ENCODE measurements at regions of chr2 and their contacts with region 1.

Region 1: GRCh38 chr2:225041851-225042799 is at the start of gene DOCK10:
- DNase-seq: peak; percentile 29 to 81 (median 57)
- ATAC-seq: peak; percentile 60
- H3K4me3 ChIP-seq: peak within 1 kb of the TSS; percentile 87 to 88
- H3K4me3 Mint-ChIP-seq: peak within 1 kb of the TSS; percentile 98
- H3K27ac ChIP-seq: peak within 1 kb of the TSS; percentile 73 to 77
- H3K27ac Mint-ChIP-seq: peak within 1 kb of the TSS; percentile 97
- H3K4me1 ChIP-seq: peaks cover 50% of the 10 kb centered on the region
- H3K4me1 Mint-ChIP-seq: peaks cover 55% of the 10 kb centered on the region
- H3K27me3 ChIP-seq: no peaks in the 10 kb centered on the region
- H3K27me3 Mint-ChIP-seq: no peaks in the 10 kb centered on the region
- CTCF ChIP-seq: no peak
- total RNA-seq, gene DOCK10: 183 to 188 TPM

Region 2: GRCh38 chr2:224927646-224928173 is 114.4 kb before region 1 on chr2:
- CTCF ChIA-PET with region 1: interaction called, 3 read pairs
- POLR2A ChIA-PET with region 1: interaction called, 3 read pairs
- intact Hi-C with region 1: loop called in 1 of 2 experiments (anchors 5 kb)
- DNase-seq: peak; percentile 39 to 93 (median 65)
- ATAC-seq: peak; percentile 81
- H3K4me3 ChIP-seq: no peak overlapping the region
- H3K4me3 Mint-ChIP-seq: peak overlapping the region; percentile 62
- H3K27ac ChIP-seq: peak overlapping the region; percentile 77 to 84
- H3K27ac Mint-ChIP-seq: peak overlapping the region; percentile 99
- H3K4me1 ChIP-seq: peaks cover 94% of the 10 kb centered on the region
- H3K4me1 Mint-ChIP-seq: peaks cover 97% of the 10 kb centered on the region
- H3K27me3 ChIP-seq: no peaks in the 10 kb centered on the region
- H3K27me3 Mint-ChIP-seq: no peaks in the 10 kb centered on the region
- CTCF ChIP-seq: no peak

Region 3: DNA sequence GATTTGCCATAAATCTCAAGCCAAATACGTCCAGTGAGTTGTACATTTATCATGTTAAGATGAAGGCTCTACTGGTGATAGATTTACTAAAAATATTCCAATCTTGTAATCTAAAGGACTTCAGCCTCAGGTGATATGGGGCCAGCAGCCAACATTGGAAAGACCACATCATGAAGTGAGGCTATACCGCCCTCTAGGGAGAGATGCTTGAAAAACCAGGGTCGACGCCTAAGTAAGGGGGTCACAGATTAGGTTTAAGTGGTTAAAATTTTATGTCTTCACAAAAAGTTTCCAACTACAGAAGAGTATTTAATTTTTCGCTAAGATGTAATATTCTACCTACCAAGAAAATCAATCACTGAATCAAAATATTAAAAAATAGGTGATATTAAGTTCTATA is 33.2 kb before region 1 on chr2:
- CTCF ChIA-PET with region 1: interaction called, 6 read pairs
- POLR2A ChIA-PET with region 1: interaction called, 3 read pairs
- intact Hi-C with region 1: loop called in 1 of 2 experiments (anchors 2 kb)
- DNase-seq: peak in 3 of 9 experiments; percentile 25 to 60 (median 46)
- ATAC-seq: no peak
- H3K4me3 ChIP-seq: no peak overlapping the region
- H3K4me3 Mint-ChIP-seq: no peak overlapping the region
- H3K27ac ChIP-seq: no peak overlapping the region
- H3K27ac Mint-ChIP-seq: peak overlapping the region; percentile 82
- H3K4me1 ChIP-seq: peaks cover 47% of the 10 kb centered on the region
- H3K4me1 Mint-ChIP-seq: peaks cover 93% of the 10 kb centered on the region
- H3K27me3 ChIP-seq: no peaks in the 10 kb centered on the region
- H3K27me3 Mint-ChIP-seq: no peaks in the 10 kb centered on the region
- CTCF ChIP-seq: peak; percentile 46

Region 4: GRCh38 chr2:225025917-225026571 is 16.1 kb before region 1 on chr2:
- CTCF ChIA-PET with region 1: interaction called, 8 read pairs
- POLR2A ChIA-PET with region 1: interaction called, 3 read pairs
- intact Hi-C with region 1: loop called in 1 of 2 experiments (anchors 1 kb)
- DNase-seq: peak in 3 of 9 experiments; percentile 35 to 53 (median 39)
- ATAC-seq: peak; percentile 69
- H3K4me3 ChIP-seq: no peak overlapping the region
- H3K4me3 Mint-ChIP-seq: peak overlapping the region; percentile 12
- H3K27ac ChIP-seq: peak overlapping the region in 1 of 2 experiments; percentile 34
- H3K27ac Mint-ChIP-seq: peak overlapping the region; percentile 70
- H3K4me1 ChIP-seq: peaks cover 71% of the 10 kb centered on the region
- H3K4me1 Mint-ChIP-seq: peaks cover 85% of the 10 kb centered on the region
- H3K27me3 ChIP-seq: no peaks in the 10 kb centered on the region
- H3K27me3 Mint-ChIP-seq: no peaks in the 10 kb centered on the region
- CTCF ChIP-seq: no peak

Region 5: GRCh38 chr2:225052703-225053102 is 10.6 kb after region 1 on chr2:
- CTCF ChIA-PET with region 1: interaction called, 17 read pairs
- POLR2A ChIA-PET with region 1: interaction called, 25 read pairs
- intact Hi-C with region 1: loop called in 1 of 2 experiments (anchors 1 kb)
- DNase-seq: peak in 8 of 9 experiments; percentile 15 to 78 (median 40)
- ATAC-seq: peak; percentile 79
- H3K4me3 ChIP-seq: no peak overlapping the region
- H3K4me3 Mint-ChIP-seq: peak overlapping the region; percentile 64
- H3K27ac ChIP-seq: peak overlapping the region in 1 of 2 experiments; percentile 32
- H3K27ac Mint-ChIP-seq: peak overlapping the region; percentile 87
- H3K4me1 ChIP-seq: peaks cover 54% of the 10 kb centered on the region
- H3K4me1 Mint-ChIP-seq: peaks cover 67% of the 10 kb centered on the region
- H3K27me3 ChIP-seq: no peaks in the 10 kb centered on the region
- H3K27me3 Mint-ChIP-seq: no peaks in the 10 kb centered on the region
- CTCF ChIP-seq: no peak

Region 6: DNA sequence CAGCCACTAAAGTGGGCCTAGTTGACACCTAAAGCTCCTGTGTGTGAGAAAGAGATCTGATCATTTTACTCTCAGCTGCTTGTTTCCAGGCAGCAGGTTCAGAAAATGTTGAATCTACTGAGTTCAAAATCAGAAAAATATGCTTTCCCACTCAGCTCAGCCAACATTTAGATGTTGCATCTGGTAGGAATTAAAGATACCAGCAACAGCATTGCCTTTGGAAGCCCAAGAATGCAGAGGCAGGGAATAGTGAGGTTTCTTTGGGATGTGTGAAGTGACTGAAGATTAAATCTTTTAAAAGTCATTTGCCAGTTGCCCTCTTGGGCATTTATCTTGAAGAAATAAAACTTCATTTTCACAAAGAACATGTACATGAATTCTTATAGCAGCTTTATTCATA is 34.0 kb after region 1 on chr2:
- CTCF ChIA-PET with region 1: no interaction called
- POLR2A ChIA-PET with region 1: no interaction called
- intact Hi-C with region 1: loop called in 1 of 2 experiments (anchors 5 kb)
- DNase-seq: no peak
- ATAC-seq: no peak
- H3K4me3 ChIP-seq: no peak overlapping the region
- H3K4me3 Mint-ChIP-seq: no peak overlapping the region
- H3K27ac ChIP-seq: no peak overlapping the region
- H3K27ac Mint-ChIP-seq: no peak overlapping the region
- H3K4me1 ChIP-seq: no peaks in the 10 kb centered on the region
- H3K4me1 Mint-ChIP-seq: peaks cover 9% of the 10 kb centered on the region
- H3K27me3 ChIP-seq: no peaks in the 10 kb centered on the region
- H3K27me3 Mint-ChIP-seq: no peaks in the 10 kb centered on the region
- CTCF ChIP-seq: no peak

Region 7: GRCh38 chr2:225091336-225091735 is 49.2 kb after region 1 on chr2:
- CTCF ChIA-PET with region 1: no interaction called
- POLR2A ChIA-PET with region 1: no interaction called
- intact Hi-C with region 1: no loop called
- DNase-seq: no peak
- ATAC-seq: no peak
- H3K4me3 ChIP-seq: no peak overlapping the region
- H3K4me3 Mint-ChIP-seq: no peak overlapping the region
- H3K27ac ChIP-seq: no peak overlapping the region
- H3K27ac Mint-ChIP-seq: no peak overlapping the region
- H3K4me1 ChIP-seq: no peaks in the 10 kb centered on the region
- H3K4me1 Mint-ChIP-seq: peaks cover 13% of the 10 kb centered on the region
- H3K27me3 ChIP-seq: no peaks in the 10 kb centered on the region
- H3K27me3 Mint-ChIP-seq: no peaks in the 10 kb centered on the region
- CTCF ChIP-seq: no peak